Prostate gland (tissue), 2 donors: ENCODE measurements at regions of chr5 and their contacts with region 1.

Region 1: DNA sequence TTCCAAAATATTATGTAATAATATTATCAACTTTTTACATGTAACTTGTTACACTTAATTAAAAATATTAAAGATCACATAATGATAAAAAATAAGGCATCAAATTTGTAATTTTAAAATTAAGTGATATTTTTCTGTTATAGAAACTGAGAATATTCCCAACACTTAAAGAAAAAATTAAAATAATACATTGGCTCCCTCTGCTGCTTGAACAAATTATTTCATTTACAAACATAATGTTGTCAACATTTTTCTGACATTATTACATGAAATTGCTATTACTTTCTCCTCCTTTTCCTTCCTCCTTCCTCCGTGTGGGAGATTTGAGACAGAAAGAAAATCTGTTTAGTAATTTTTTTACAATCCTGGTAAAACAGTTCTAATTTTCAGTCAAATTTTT is 42.3 kb downstream of the RNF180 start:
- DNase-seq: no peak
- H3K4me3 ChIP-seq: no peak overlapping the region
- H3K27ac ChIP-seq: no peak overlapping the region
- H3K4me1 ChIP-seq: no peaks in the 10 kb centered on the region
- H3K27me3 ChIP-seq: no peaks in the 10 kb centered on the region
- CTCF ChIP-seq: peak in 2 of 4 experiments; percentile 33 to 42
- POLR2A ChIP-seq: no peak

Region 2: GRCh38 chr5:64074533-64074932 is 133.4 kb before region 1 on chr5:
- intact Hi-C with region 1: loop called (anchors 10 kb)
- DNase-seq: no peak
- H3K4me3 ChIP-seq: no peak overlapping the region
- H3K27ac ChIP-seq: no peak overlapping the region
- H3K4me1 ChIP-seq: no peaks in the 10 kb centered on the region
- H3K27me3 ChIP-seq: no peaks in the 10 kb centered on the region
- CTCF ChIP-seq: peak in 3 of 4 experiments; percentile 31 to 47 (median 47)
- POLR2A ChIP-seq: no peak

Region 3: GRCh38 chr5:64147849-64148441 is 60.0 kb before region 1 on chr5:
- intact Hi-C with region 1: loop called (anchors 5 kb)
- DNase-seq: peak; percentile 57
- H3K4me3 ChIP-seq: no peak overlapping the region
- H3K27ac ChIP-seq: no peak overlapping the region
- H3K4me1 ChIP-seq: no peaks in the 10 kb centered on the region
- H3K27me3 ChIP-seq: no peaks in the 10 kb centered on the region
- CTCF ChIP-seq: peak; percentile 16 to 87 (median 70)
- POLR2A ChIP-seq: no peak

Region 4: DNA sequence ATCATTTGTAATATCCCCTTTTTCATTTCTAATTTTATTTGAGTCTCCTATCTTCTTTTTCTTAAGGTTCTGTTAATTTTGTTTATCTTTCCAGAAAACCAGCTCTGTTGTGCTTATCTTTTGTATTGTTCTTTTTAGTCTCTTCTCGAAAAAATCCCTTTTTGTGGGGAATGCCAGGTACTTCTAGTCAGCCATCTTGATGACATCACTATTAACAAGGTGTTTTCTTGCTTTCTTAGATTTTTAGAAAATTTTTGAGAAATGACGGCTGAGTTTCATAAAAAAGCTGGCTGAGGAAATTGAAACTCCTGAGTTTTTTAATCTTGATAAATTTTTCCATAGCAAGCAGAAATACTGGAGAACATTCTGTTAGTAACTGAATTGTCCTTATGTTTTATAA is 31.7 kb before region 1 on chr5:
- intact Hi-C with region 1: no loop called
- DNase-seq: no peak
- H3K4me3 ChIP-seq: no peak overlapping the region
- H3K27ac ChIP-seq: no peak overlapping the region
- H3K4me1 ChIP-seq: no peaks in the 10 kb centered on the region
- H3K27me3 ChIP-seq: no peaks in the 10 kb centered on the region
- CTCF ChIP-seq: no peak
- POLR2A ChIP-seq: no peak

Region 5: GRCh38 chr5:64680289-64680688 is 472.3 kb after region 1 on chr5:
- intact Hi-C with region 1: no loop called
- DNase-seq: no peak
- H3K4me3 ChIP-seq: no peak overlapping the region
- H3K27ac ChIP-seq: no peak overlapping the region
- H3K4me1 ChIP-seq: no peaks in the 10 kb centered on the region
- H3K27me3 ChIP-seq: no peaks in the 10 kb centered on the region
- CTCF ChIP-seq: no peak
- POLR2A ChIP-seq: no peak